ENCODE measurements at regions of chr2 and their contacts with region 1.

Region 1: GRCh38 chr2:229852565-229852964 is 69.2 kb downstream of the TRIP12 start:
- DNase-seq: peak; percentile 63
- ATAC-seq: peak; percentile 94
- H3K4me3 Mint-ChIP-seq: no peak overlapping the region
- H3K27ac Mint-ChIP-seq: peak overlapping the region; percentile 5
- H3K4me1 Mint-ChIP-seq: peaks cover 38% of the 10 kb centered on the region
- H3K27me3 Mint-ChIP-seq: no peaks in the 10 kb centered on the region

Region 2: GRCh38 chr2:229780856-229781773 is 71.5 kb before region 1 on chr2:
- CTCF ChIA-PET with region 1: interaction called, 13 read pairs
- POLR2A ChIA-PET with region 1: no interaction called
- DNase-seq: no peak
- ATAC-seq: peak; percentile 75
- H3K4me3 Mint-ChIP-seq: no peak overlapping the region
- H3K27ac Mint-ChIP-seq: no peak overlapping the region
- H3K4me1 Mint-ChIP-seq: peaks cover 6% of the 10 kb centered on the region
- H3K27me3 Mint-ChIP-seq: no peaks in the 10 kb centered on the region

Region 3: DNA sequence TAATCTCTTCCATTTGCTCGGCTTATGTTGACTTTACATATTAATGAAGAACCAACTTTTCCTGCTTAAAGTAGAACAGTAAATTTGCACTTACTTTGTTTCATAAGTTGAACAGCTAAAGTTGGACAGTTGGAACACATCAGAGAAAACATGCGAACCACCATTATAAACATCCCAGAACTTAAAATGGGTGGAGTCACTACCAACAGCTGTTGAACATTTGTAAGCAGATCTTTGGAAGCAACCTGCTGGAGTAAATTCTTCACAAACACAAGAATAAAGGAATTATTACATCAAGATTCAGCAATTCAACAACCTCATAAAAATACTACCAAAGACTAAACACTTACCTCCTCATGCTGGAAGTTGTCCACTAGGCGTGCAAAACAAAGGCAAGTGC is 41.8 kb before region 1 on chr2:
- CTCF ChIA-PET with region 1: no interaction called
- POLR2A ChIA-PET with region 1: no interaction called
- DNase-seq: no peak
- ATAC-seq: no peak
- H3K4me3 Mint-ChIP-seq: no peak overlapping the region
- H3K27ac Mint-ChIP-seq: no peak overlapping the region
- H3K4me1 Mint-ChIP-seq: no peaks in the 10 kb centered on the region
- H3K27me3 Mint-ChIP-seq: no peaks in the 10 kb centered on the region

Region 4: DNA sequence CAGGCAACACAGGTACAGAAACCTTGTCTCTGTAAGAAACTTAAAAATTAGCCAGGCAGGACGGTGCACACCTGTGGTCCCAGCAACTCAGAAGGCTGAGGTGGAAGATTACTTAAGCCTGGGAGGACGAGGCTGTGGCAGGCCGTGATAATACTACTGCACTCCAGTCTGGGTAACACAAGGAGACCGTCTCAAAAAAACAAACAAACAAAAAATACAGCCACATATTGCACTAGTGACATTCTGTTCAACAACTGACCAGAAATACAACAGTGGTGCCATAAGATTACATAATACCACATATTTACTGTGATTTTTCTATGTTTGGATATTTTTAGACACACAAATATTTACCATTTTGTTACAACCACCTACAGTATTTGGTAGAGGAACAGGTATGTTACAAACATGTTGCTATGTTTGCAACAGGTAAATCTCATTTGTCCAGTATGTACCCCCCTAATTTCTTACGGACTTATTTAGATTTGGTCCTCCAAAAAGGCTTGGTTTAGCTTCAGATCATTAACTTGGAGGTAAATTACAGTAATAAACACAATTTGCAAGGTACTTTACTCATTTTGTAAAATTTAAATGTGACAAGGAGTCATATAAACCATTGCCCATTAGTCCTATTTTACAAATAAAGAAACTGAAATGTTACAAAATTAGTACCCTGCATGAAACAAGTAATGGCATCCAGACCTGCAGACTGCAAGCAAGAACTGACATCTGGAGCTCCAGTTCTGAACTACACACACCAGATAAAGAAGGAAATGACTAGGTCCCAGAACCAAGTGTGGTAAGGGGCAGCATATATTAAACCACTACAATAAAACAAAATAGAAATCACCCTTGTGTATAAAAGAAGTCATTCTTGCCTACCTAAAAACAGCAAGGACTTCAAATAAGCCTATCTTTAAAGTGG is 32.5 kb after region 1 on chr2:
- CTCF ChIA-PET with region 1: no interaction called
- POLR2A ChIA-PET with region 1: no interaction called
- DNase-seq: no peak
- ATAC-seq: no peak
- H3K4me3 Mint-ChIP-seq: no peak overlapping the region
- H3K27ac Mint-ChIP-seq: no peak overlapping the region
- H3K4me1 Mint-ChIP-seq: peaks cover 6% of the 10 kb centered on the region
- H3K27me3 Mint-ChIP-seq: no peaks in the 10 kb centered on the region

Region 5: GRCh38 chr2:230124757-230125431 is 272.3 kb after region 1 on chr2:
- CTCF ChIA-PET with region 1: no interaction called
- POLR2A ChIA-PET with region 1: no interaction called
- DNase-seq: peak; percentile 46
- ATAC-seq: peak; percentile 89
- H3K4me3 Mint-ChIP-seq: peak overlapping the region; percentile 22
- H3K27ac Mint-ChIP-seq: peak overlapping the region; percentile 8
- H3K4me1 Mint-ChIP-seq: peaks cover 36% of the 10 kb centered on the region
- H3K27me3 Mint-ChIP-seq: no peaks in the 10 kb centered on the region

Region 6: DNA sequence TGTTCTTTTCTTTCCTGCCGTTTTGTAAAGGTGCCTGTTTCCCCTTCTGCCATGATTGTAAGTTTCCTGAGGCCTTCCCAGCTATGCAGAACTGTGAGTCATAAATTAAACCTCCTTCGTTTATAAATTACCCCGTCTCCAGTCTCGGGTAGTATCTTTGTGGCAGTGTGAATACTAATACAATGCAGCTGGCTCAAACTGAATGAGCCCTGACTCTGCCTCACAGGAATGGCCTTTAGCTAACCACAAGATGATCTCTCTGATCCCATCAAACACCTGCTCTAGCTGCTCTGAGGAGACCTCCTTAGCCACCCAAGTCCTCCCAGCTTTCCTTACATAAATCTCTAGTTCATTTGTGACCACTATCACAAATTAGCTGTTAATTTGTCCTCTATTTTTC is 818.6 kb after region 1 on chr2:
- CTCF ChIA-PET with region 1: no interaction called
- POLR2A ChIA-PET with region 1: no interaction called
- DNase-seq: no peak
- ATAC-seq: no peak
- H3K4me3 Mint-ChIP-seq: no peak overlapping the region
- H3K27ac Mint-ChIP-seq: peak overlapping the region; percentile 50
- H3K4me1 Mint-ChIP-seq: peaks cover 71% of the 10 kb centered on the region
- H3K27me3 Mint-ChIP-seq: no peaks in the 10 kb centered on the region

Measured in activated CD8-positive, alpha-beta T cell treated with anti-CD3 and anti-CD28 coated beads, Interleukin-2, amount 10 ng/mL, durations not matched to agents 7 days and 5 days (primary cell).